Heart left ventricle (tissue), 16 donors: ENCODE measurements at regions of chr3 and their contacts with region 1.

Region 1: GRCh38 chr3:38346587-38347410 is at the start of gene XYLB:
- DNase-seq: peak; percentile 86 to 94 (median 89)
- ATAC-seq: peak; percentile 92 to 100 (median 99)
- H3K4me3 ChIP-seq: peak within 1 kb of the TSS; percentile 44 to 93 (median 65)
- H3K27ac ChIP-seq: peak within 1 kb of the TSS in 5 of 12 donors; percentile 20 to 44 (median 25)
- H3K4me1 ChIP-seq: peaks cover 0 to 29% (median 3%) of the 10 kb centered on the region in 12 donors
- H3K27me3 ChIP-seq: no peaks in the 10 kb centered on the region
- CTCF ChIP-seq: peak; percentile 77 to 94 (median 88)
- POLR2A ChIP-seq: peak in 1 of 2 donors; percentile 29
- total RNA-seq, gene XYLB: 0.35 to 2.9 (median 1.3) TPM

Region 2: DNA sequence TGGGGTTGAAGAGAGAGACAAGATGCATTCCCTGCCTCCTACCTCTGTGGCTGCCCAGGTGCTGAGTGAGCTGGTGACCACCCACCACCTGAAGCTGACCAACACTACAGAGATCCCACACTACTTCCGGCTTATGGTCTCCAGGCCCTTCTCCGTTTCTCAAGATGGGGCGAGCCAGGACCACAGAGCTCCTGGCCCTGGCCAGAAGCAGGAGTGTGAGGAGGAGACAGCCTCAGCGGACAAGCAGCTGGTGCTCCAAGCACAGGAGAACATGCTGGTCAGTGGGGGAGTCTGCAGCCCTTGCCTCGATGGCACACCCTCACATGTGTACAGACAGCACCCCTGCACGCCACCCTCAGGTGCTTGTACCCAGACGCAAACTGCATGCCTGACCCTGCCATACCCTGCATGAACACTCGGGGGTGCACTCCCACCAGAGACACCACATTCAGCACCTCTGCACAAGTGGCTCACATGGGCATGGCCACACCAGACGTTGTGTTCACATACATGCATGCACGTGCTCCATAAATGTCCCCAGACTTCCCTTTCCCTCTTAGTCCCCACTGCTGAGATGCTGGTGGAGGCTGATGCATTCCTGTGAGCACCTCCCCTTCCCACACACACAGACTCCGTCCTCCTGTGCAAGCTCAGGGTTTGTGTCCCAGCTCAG is 228.9 kb before region 1 on chr3:
- intact Hi-C with region 1: loop called in 2 of 10 experiments (anchors 5 to 10 kb)
- DNase-seq: peak in 3 of 5 donors; percentile 61 to 73 (median 69)
- ATAC-seq: peak; percentile 62 to 79 (median 72)
- H3K4me3 ChIP-seq: no peak overlapping the region
- H3K27ac ChIP-seq: no peak overlapping the region
- H3K4me1 ChIP-seq: peaks cover 0 to 12% (median 0%) of the 10 kb centered on the region in 12 donors
- H3K27me3 ChIP-seq: no peaks in the 10 kb centered on the region
- CTCF ChIP-seq: peak; percentile 47 to 79 (median 60)
- POLR2A ChIP-seq: no peak

Region 3: GRCh38 chr3:38468782-38469181 is 122.0 kb after region 1 on chr3:
- intact Hi-C with region 1: loop called in 1 of 10 experiments (anchors 1 kb)
- DNase-seq: no peak
- ATAC-seq: no peak
- H3K4me3 ChIP-seq: no peak overlapping the region
- H3K27ac ChIP-seq: no peak overlapping the region
- H3K4me1 ChIP-seq: peaks cover 0 to 25% (median 11%) of the 10 kb centered on the region in 12 donors
- H3K27me3 ChIP-seq: no peaks in the 10 kb centered on the region
- CTCF ChIP-seq: no peak
- POLR2A ChIP-seq: no peak